ENCODE measurements at regions of chr11 and their contacts with region 1.

Region 1: DNA sequence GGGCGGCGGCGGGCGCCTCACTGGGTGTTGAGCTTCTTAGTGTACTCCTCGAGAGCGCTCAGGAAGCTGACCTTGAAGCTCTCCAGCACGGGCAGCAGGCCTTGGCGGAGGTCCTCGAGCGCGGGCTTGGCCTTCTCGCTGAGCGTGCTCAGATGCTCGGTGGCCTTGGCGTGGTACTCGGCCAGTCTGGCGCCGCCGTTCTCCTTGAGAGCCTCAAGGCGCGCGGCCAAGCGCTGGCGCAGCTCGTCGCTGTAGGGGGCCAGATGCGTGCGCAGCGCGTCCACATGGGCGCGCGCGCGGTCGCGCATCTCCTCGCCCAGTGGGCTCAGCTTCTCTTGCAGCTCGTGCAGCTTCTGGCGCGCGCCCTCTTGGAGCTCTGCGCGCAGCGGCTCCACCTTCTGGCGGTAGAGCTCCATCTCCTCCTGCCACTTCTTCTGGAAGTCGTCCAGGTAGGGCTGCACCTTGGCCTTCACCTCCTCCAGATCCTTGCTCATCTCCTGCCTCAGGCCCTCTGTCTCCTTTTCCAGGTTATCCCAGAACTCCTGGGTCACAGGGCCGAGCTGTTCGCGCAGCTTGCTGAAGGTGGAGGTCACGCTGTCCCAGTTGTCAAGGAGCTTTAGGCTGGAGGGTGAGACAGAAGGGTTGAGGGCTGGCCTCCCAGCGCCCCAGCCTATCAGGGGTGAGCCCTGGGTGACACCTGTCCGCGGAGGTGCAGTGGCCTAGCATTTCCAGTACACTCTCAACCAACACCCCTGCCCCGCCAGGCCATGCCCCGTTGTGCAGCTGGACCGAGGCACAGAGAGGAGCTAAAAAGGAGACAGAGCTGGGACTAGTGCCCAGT is 1.4 kb downstream of the APOA1 start:
- DNase-seq: peak; percentile 89
- H3K4me3 ChIP-seq: peak overlapping the region; percentile 41
- H3K27ac ChIP-seq: no peak overlapping the region
- H3K4me1 ChIP-seq: peaks cover 13% of the 10 kb centered on the region
- CTCF ChIP-seq: peak; percentile 75

Region 2: DNA sequence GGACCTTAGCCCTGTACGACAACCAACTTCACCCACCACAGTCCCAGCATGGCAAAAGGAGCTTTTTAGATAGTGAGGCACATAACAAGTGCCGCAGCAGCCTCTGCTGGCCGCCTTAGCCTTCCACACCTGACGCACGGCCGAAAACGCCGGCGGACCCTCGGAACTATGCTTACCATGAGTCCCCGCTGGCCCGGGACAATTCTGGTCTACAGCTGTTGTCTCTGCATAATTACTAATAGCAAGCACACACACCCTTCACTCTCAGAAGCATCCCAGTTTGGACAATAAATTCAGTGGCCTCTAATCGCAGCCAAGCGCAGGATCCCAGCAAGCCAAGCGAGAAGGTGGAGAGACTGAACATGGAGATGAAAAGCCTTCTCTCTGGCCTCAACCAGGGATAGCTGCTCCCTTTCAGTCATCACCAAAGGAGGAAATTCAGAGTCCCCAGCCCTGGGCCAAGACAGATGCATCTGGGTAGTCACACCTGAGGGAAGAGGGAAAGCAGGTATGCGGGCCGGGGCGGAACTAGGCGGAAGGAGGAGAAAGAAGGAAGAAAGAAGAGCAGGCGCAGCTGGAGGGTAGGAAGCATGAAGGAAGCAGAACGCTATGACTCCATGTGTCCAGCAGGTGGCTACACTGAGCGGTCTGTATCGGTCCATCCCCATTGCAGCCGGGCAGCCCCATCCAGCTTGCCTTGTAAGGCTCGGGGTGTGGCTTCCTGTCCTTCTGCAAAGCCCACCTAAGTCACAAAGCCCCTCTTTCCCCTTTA is 103.6 kb before region 1 on chr11:
- CTCF ChIA-PET with region 1: interaction called, 3 read pairs
- POLR2A ChIA-PET with region 1: no interaction called
- intact Hi-C with region 1: loop called (anchors 1 kb)
- DNase-seq: peak; percentile 73
- H3K4me3 ChIP-seq: no peak overlapping the region
- H3K27ac ChIP-seq: no peak overlapping the region
- H3K4me1 ChIP-seq: no peaks in the 10 kb centered on the region
- CTCF ChIP-seq: peak; percentile 80